Psoas muscle (tissue), 8 donors: ENCODE measurements at regions of chr6 and their contacts with region 1.

Region 1: GRCh38 chr6:106444777-106445507 is 84.4 kb downstream of the CRYBG1 start:
- DNase-seq: no peak
- ATAC-seq: peak; percentile 68 to 86 (median 75)
- H3K4me3 ChIP-seq: no peak overlapping the region
- H3K27ac ChIP-seq: no peak overlapping the region
- H3K4me1 ChIP-seq: no peaks in the 10 kb centered on the region
- H3K27me3 ChIP-seq: peaks cover 0 to 25% (median 10%) of the 10 kb centered on the region in 3 donors
- CTCF ChIP-seq: peak; percentile 77

Region 2: GRCh38 chr6:106470316-106470715 is 25.4 kb after region 1 on chr6:
- intact Hi-C with region 1: no loop called
- DNase-seq: no peak
- ATAC-seq: no peak
- H3K4me3 ChIP-seq: no peak overlapping the region
- H3K27ac ChIP-seq: no peak overlapping the region
- H3K4me1 ChIP-seq: no peaks in the 10 kb centered on the region
- H3K27me3 ChIP-seq: peaks cover 0 to 14% (median 3%) of the 10 kb centered on the region in 3 donors
- CTCF ChIP-seq: no peak

Region 3: DNA sequence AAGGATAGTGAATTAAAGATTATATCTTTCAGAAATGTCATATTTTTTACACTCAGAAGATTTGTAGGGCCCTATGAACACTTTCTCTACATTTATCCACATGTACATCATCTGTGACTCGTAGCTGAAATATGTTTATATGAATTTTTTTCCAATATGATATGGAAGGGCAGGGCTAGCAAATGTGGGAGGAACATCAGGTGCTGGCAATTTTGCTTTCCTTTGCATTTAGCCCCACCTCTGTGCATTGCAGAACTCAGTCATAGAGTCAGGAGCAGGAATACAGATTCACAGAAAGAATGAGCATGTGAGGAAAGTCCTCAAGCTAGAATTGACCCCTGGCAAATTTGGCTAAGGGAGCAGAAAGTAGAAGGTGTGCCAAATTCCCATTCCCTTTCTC is 45.5 kb after region 1 on chr6:
- intact Hi-C with region 1: loop called in 1 of 2 experiments (anchors 2 kb)
- DNase-seq: no peak
- ATAC-seq: no peak
- H3K4me3 ChIP-seq: no peak overlapping the region
- H3K27ac ChIP-seq: no peak overlapping the region
- H3K4me1 ChIP-seq: no peaks in the 10 kb centered on the region
- H3K27me3 ChIP-seq: peaks cover 0 to 6% (median 4%) of the 10 kb centered on the region in 3 donors
- CTCF ChIP-seq: no peak

Region 4: DNA sequence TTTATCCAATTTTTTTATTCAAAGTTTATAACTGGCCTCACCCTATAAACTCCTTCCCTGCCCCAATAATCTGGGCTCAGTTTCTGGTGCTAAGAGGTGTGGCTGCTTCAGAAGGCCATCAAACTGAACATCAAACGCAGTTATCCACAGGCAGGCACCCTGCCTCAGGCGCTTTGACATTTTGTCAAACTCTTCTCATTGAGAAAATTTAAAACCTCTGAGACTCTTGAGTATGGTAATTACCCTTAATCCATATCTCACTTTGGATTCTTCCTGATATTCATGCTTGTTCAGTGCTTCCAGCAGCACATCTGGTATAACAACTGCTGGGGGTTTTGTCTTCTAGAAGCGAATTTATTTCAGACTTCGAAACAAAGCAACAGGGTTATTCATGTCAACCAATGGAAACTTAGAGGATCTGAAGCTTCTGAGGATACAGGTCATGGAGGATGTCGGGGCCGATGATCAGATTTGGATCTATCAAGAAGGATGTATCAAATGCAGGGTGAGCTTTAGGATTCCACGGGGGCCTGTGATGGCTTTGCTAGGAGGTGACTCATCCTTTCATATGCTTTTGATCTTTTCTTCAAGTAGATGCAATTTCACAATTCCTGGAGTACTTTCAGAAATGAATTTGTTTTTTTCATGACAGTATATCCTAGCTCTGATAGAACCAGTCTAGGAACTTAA is 116.2 kb after region 1 on chr6:
- intact Hi-C with region 1: loop called (anchors 2 kb)
- DNase-seq: no peak
- ATAC-seq: no peak
- H3K4me3 ChIP-seq: no peak overlapping the region
- H3K27ac ChIP-seq: no peak overlapping the region
- H3K4me1 ChIP-seq: no peaks in the 10 kb centered on the region
- H3K27me3 ChIP-seq: no peaks in the 10 kb centered on the region
- CTCF ChIP-seq: no peak

Region 5: DNA sequence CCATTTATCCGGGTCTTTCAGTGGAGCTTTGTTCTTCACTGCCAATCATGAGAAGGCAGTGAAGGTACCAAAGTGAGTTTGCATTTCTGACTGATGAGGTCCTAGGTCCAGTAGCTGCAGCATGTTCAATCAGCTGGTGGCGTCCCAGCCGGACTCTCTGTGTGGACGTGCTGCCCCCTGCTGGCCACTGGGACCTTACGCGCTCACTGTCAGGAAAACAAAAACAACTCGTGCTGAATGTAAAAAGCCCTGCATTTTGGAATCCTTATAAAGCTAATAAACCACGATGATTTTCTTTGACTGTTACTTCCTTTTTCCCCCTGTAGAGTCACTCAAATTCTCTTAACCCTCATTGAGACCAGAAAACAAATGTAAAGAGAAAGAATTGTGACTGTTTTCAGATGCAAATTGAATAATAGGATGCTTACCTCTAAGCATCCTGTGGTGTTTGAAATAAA is 534.5 kb after region 1 on chr6:
- intact Hi-C with region 1: loop called (anchors 2 kb)
- DNase-seq: peak; percentile 85 to 91
- ATAC-seq: peak; percentile 87 to 94 (median 89)
- H3K4me3 ChIP-seq: no peak overlapping the region
- H3K27ac ChIP-seq: no peak overlapping the region
- H3K4me1 ChIP-seq: peaks cover under 1% of the 10 kb centered on the region
- H3K27me3 ChIP-seq: peaks cover 0 to 49% (median 5%) of the 10 kb centered on the region in 3 donors
- CTCF ChIP-seq: peak; percentile 93